ENCODE measurements at regions of chr1 and their contacts with region 1.

Region 1: GRCh38 chr1:246497331-246497915 is 9.7 kb downstream of the SMYD3 start:
- DNase-seq: peak; percentile 92
- ATAC-seq: peak; percentile 52
- H3K4me3 ChIP-seq: no peak overlapping the region
- H3K27ac ChIP-seq: no peak overlapping the region
- H3K4me1 ChIP-seq: peaks cover 12% of the 10 kb centered on the region
- H3K27me3 ChIP-seq: no peaks in the 10 kb centered on the region
- CTCF ChIP-seq: peak; percentile 95

Region 2: DNA sequence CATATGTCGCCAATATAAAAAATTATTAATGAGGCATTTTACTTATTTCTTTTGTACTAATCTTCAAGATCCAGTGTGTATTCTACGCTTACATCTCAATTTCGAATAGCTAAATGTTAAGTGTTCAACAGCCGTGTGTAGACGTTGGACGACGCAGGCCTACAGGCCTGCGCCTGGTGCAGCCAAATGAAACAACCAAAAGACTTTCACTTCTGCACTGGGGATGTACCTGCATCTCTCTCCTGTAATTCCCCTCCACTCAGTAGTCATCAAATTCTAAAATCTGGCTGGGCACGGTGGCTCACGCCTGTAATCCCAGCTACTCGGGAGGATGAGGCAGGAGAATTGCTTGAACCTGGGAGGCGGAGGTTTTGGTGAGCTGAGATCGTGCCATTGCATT is 1556.3 kb before region 1 on chr1:
- CTCF ChIA-PET with region 1: interaction called, 10 read pairs
- POLR2A ChIA-PET with region 1: no interaction called
- intact Hi-C with region 1: no loop called
- DNase-seq: no peak
- ATAC-seq: no peak
- H3K4me3 ChIP-seq: no peak overlapping the region
- H3K27ac ChIP-seq: no peak overlapping the region
- H3K4me1 ChIP-seq: no peaks in the 10 kb centered on the region
- H3K27me3 ChIP-seq: no peaks in the 10 kb centered on the region
- CTCF ChIP-seq: no peak

Region 3: GRCh38 chr1:246012341-246012740 is 485.1 kb before region 1 on chr1:
- CTCF ChIA-PET with region 1: no interaction called
- POLR2A ChIA-PET with region 1: no interaction called
- intact Hi-C with region 1: loop called (anchors 5 kb)
- DNase-seq: peak; percentile 66
- ATAC-seq: peak; percentile 49
- H3K4me3 ChIP-seq: no peak overlapping the region
- H3K27ac ChIP-seq: no peak overlapping the region
- H3K4me1 ChIP-seq: no peaks in the 10 kb centered on the region
- H3K27me3 ChIP-seq: no peaks in the 10 kb centered on the region
- CTCF ChIP-seq: peak; percentile 85

Region 4: GRCh38 chr1:246280551-246280950 is 216.9 kb before region 1 on chr1:
- CTCF ChIA-PET with region 1: no interaction called
- POLR2A ChIA-PET with region 1: no interaction called
- intact Hi-C with region 1: loop called (anchors 2 kb)
- DNase-seq: peak; percentile 44
- ATAC-seq: peak; percentile 17; the same call in 1 of the 2 replicates
- H3K4me3 ChIP-seq: no peak overlapping the region
- H3K27ac ChIP-seq: peak overlapping the region; percentile 54
- H3K4me1 ChIP-seq: peaks cover 23% of the 10 kb centered on the region
- H3K27me3 ChIP-seq: no peaks in the 10 kb centered on the region
- CTCF ChIP-seq: peak; percentile 67

Region 5: GRCh38 chr1:246459221-246459620 is 38.2 kb before region 1 on chr1:
- CTCF ChIA-PET with region 1: no interaction called
- POLR2A ChIA-PET with region 1: no interaction called
- intact Hi-C with region 1: no loop called
- DNase-seq: no peak
- ATAC-seq: no peak
- H3K4me3 ChIP-seq: no peak overlapping the region
- H3K27ac ChIP-seq: no peak overlapping the region
- H3K4me1 ChIP-seq: no peaks in the 10 kb centered on the region
- H3K27me3 ChIP-seq: no peaks in the 10 kb centered on the region
- CTCF ChIP-seq: no peak

Region 6: GRCh38 chr1:246528933-246529731 is 31.7 kb after region 1 on chr1:
- CTCF ChIA-PET with region 1: interaction called, 4 read pairs
- POLR2A ChIA-PET with region 1: no interaction called
- intact Hi-C with region 1: loop called (anchors 1 kb)
- DNase-seq: peak; percentile 49
- ATAC-seq: peak; percentile 18
- H3K4me3 ChIP-seq: no peak overlapping the region
- H3K27ac ChIP-seq: no peak overlapping the region
- H3K4me1 ChIP-seq: peaks cover 10% of the 10 kb centered on the region
- H3K27me3 ChIP-seq: no peaks in the 10 kb centered on the region
- CTCF ChIP-seq: peak; percentile 50

Region 7: GRCh38 chr1:246597340-246597739 is 99.9 kb after region 1 on chr1:
- CTCF ChIA-PET with region 1: no interaction called
- POLR2A ChIA-PET with region 1: no interaction called
- intact Hi-C with region 1: no loop called
- DNase-seq: peak; percentile 98
- ATAC-seq: peak; percentile 99
- H3K4me3 ChIP-seq: 0 out of 2 replicates have a peak overlapping the region, but pooled peaks have one; percentile 2
- H3K27ac ChIP-seq: peak overlapping the region; percentile 79
- H3K4me1 ChIP-seq: peaks cover 18% of the 10 kb centered on the region
- H3K27me3 ChIP-seq: no peaks in the 10 kb centered on the region
- CTCF ChIP-seq: no peak

Region 8: GRCh38 chr1:246699095-246699735 is 201.8 kb after region 1 on chr1:
- CTCF ChIA-PET with region 1: no interaction called
- POLR2A ChIA-PET with region 1: no interaction called
- intact Hi-C with region 1: loop called (anchors 1 kb)
- DNase-seq: peak; percentile 96
- ATAC-seq: peak; percentile 95
- H3K4me3 ChIP-seq: peak overlapping the region; percentile 39
- H3K27ac ChIP-seq: peak overlapping the region; percentile 7
- H3K4me1 ChIP-seq: peaks cover 9% of the 10 kb centered on the region
- H3K27me3 ChIP-seq: no peaks in the 10 kb centered on the region
- CTCF ChIP-seq: peak; percentile 95

Region 9: DNA sequence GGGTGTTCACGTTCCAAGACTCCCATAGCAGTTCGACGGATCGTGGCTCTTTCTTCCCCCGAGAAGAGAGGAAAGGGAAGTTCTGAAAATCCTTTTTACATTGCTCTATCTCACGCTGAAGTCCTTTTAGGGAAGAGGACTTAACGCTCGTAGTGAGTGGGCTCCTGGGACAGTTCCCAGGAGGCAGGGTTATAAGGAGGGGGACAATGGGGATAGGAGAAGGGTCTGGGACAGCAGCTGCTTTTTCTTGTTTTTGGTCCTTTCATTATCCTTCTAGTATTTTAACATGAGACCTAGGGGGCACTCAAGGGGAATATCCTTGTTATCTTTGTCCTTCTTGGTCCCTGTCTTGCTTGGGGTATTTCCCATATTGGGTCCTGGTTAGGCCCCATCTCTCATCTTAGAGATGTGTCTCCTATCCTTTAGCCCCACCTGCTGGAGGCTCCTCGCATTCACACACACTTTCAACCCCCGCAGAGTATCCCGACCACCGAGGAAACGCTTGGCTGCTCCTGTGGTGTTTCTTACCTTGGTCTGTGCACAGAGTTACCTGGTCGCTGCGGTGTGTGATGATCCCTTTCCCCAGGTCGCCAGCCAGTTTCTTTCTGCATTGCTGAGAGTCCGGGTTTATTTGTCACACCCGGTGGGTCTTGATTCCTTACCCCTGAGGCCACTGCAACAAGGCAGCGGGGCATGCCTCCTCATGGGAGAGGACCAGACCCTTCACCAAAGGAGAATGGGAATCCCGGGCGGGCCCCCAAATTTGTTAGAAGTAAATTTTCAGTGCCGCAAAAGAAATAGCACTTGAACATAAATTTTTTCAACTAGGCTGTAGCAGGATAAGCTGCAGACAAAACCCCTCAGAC is 256.5 kb after region 1 on chr1:
- CTCF ChIA-PET with region 1: no interaction called
- POLR2A ChIA-PET with region 1: no interaction called
- intact Hi-C with region 1: loop called (anchors 1 kb)
- DNase-seq: peak; percentile 81
- ATAC-seq: peak; percentile 95
- H3K4me3 ChIP-seq: no peak overlapping the region
- H3K27ac ChIP-seq: no peak overlapping the region
- H3K4me1 ChIP-seq: no peaks in the 10 kb centered on the region
- H3K27me3 ChIP-seq: no peaks in the 10 kb centered on the region
- CTCF ChIP-seq: peak; percentile 94

Measured in PC-3 (cell line).